PC-3 (cell line): ENCODE measurements at regions of chr16 and their contacts with region 1.

Region 1: DNA sequence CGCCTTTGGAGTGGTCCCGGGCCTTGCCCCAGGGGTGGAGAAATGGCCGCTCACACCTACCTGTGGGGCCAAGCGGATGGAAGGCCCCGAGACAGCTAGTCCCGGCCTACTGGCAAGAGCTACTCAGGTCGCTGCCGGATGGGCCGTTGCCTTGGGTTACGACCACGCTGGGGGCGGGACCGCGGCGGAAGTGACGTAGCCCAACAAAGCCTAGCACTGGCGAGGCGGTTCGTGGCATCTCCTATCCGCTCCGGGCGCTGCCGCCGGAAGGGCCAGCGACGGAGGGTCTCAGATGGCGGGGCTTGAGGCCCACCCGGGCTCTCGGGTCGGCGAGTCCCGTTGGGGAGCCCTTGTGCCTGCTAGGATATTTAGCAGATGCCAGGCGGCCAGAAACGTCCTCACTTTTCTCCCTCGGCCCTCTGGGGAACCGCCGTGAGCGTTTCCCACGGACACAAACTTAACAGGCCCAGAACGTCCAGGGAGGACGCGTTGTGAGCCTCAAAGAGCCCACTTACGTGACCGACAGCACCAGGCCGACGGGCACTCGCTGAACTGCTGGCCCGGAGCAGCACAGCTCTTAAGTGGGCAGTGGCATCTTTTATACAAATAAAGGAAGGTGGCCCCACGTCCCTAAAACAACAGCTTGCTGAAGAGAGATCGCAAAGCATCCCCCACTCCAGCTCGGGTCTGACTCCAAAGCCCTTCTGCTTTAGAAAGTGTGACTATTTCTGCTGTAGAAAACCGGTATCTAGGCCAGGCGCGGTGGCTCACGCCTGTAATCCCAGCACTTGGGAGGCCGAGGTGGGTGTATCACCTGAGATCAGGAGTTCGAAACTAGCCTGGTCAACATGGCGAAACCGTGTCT is at the start of gene C16orf46:
- DNase-seq: peak; percentile 90
- ATAC-seq: peak; percentile 93
- H3K4me3 ChIP-seq: peak within 1 kb of the TSS; percentile 77
- H3K27ac ChIP-seq: peak within 1 kb of the TSS; percentile 41
- H3K4me1 ChIP-seq: peaks cover 6% of the 10 kb centered on the region; the same call in 1 of the 2 replicates
- H3K27me3 ChIP-seq: no peaks in the 10 kb centered on the region
- CTCF ChIP-seq: no peak
- total RNA-seq, gene C16orf46: 0.73 TPM in 1 of 2 replicates, not detected in the other

Region 2: DNA sequence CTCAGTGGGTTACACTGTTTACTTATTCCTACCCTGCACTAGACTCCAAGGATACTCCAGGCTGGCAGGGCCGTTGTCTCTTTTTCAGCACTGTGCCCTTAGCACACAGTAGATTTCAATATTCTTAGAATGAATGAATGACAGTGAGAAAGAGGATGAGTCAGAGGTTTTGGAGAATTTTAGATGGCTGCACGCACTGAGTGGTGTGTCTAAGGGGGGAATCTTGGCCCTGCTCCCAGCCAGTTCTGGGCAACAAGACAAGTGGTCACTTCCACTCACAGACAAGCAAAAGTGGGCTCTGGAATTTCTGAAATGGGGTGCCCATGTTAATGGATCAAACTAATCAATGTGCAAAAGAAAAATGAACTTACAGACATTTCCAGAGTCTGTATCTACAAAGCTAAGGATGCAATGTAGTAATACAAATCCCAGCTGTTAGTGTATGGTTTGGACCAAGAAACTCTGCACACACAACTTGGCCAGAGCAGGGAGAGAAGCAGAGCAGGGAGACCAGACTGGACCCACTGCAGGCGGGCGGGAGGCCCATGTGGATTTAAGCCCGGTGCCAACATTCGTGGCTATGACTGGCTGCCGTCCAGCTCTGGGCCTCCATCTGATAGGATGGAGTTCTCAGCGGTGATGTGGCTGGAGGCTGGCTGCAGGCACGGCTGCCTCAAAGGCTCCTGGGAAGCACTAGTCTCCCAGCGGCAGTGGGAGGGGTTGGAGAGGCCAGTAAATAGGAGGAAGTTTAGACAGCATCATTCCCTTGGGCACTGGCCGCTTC is 177.3 kb before region 1 on chr16:
- CTCF ChIA-PET with region 1: no interaction called
- POLR2A ChIA-PET with region 1: no interaction called
- intact Hi-C with region 1: no loop called
- DNase-seq: peak; percentile 76
- ATAC-seq: peak; percentile 77
- H3K4me3 ChIP-seq: no peak overlapping the region
- H3K27ac ChIP-seq: peak overlapping the region; percentile 67
- H3K4me1 ChIP-seq: peaks cover 13% of the 10 kb centered on the region
- H3K27me3 ChIP-seq: no peaks in the 10 kb centered on the region
- CTCF ChIP-seq: no peak

Region 3: GRCh38 chr16:80954985-80955384 is 122.3 kb before region 1 on chr16:
- CTCF ChIA-PET with region 1: no interaction called
- POLR2A ChIA-PET with region 1: no interaction called
- intact Hi-C with region 1: no loop called
- DNase-seq: no peak
- ATAC-seq: no peak
- H3K4me3 ChIP-seq: no peak overlapping the region
- H3K27ac ChIP-seq: no peak overlapping the region
- H3K4me1 ChIP-seq: no peaks in the 10 kb centered on the region
- H3K27me3 ChIP-seq: no peaks in the 10 kb centered on the region
- CTCF ChIP-seq: no peak

Region 4: GRCh38 chr16:81006814-81007696 is 70.3 kb before region 1 on chr16 and contains the starts of genes CENPN and CMC2:
- CTCF ChIA-PET with region 1: no interaction called
- POLR2A ChIA-PET with region 1: no interaction called
- intact Hi-C with region 1: loop called (anchors 2 kb)
- DNase-seq: peak; percentile 93
- ATAC-seq: peak; percentile 90
- H3K4me3 ChIP-seq: peak within 1 kb of the TSS; percentile 99
- H3K27ac ChIP-seq: peak within 1 kb of the TSS; percentile 92
- H3K4me1 ChIP-seq: peaks cover 10% of the 10 kb centered on the region; the same call in 1 of the 2 replicates
- H3K27me3 ChIP-seq: no peaks in the 10 kb centered on the region
- CTCF ChIP-seq: no peak
- total RNA-seq, gene CENPN: 60.9 and 63.1 TPM in 2 replicates
- total RNA-seq, gene CMC2: 75.3 and 86.2 TPM in 2 replicates

Region 5: GRCh38 chr16:81095953-81096717 is 18.8 kb after region 1 on chr16 and contains the start of gene GCSH:
- CTCF ChIA-PET with region 1: no interaction called
- POLR2A ChIA-PET with region 1: no interaction called
- intact Hi-C with region 1: loop called (anchors 2 kb)
- DNase-seq: peak; percentile 93
- ATAC-seq: peak; percentile 98
- H3K4me3 ChIP-seq: peak within 1 kb of the TSS; percentile 91
- H3K27ac ChIP-seq: peak within 1 kb of the TSS; percentile 6; the same call in 1 of the 2 replicates
- H3K4me1 ChIP-seq: peaks cover 13% of the 10 kb centered on the region
- H3K27me3 ChIP-seq: no peaks in the 10 kb centered on the region
- CTCF ChIP-seq: no peak
- total RNA-seq, gene GCSH: 36.1 and 47.5 TPM in 2 replicates

Region 6: DNA sequence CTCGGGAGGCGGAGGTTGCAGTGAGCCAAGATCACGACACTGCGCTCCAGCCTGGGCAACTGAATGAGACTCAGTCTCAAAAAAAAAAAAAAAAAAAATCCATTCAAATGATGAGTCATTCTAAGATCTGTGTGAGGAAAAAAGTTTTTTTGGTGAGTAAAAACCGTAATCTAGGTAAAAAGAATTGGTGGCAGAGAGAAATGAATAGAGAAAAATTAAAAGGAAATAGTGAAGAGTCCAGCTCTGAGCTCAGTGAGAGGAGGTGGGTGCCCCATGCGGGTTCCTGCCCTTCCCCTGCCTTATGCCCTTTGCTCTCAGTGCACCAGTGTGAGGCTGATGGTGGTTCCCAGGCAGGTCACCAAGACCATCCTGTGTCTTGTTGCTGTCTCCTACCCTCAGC is 258.4 kb after region 1 on chr16:
- CTCF ChIA-PET with region 1: no interaction called
- POLR2A ChIA-PET with region 1: no interaction called
- intact Hi-C with region 1: loop called (anchors 5 kb)
- DNase-seq: no peak
- ATAC-seq: no peak
- H3K4me3 ChIP-seq: no peak overlapping the region
- H3K27ac ChIP-seq: no peak overlapping the region
- H3K4me1 ChIP-seq: peaks cover 18% of the 10 kb centered on the region
- H3K27me3 ChIP-seq: no peaks in the 10 kb centered on the region
- CTCF ChIP-seq: no peak